ENCODE measurements at regions of chr16 and their contacts with region 1.

Region 1: GRCh38 chr16:56931892-56932720 is at the start of gene HERPUD1:
- DNase-seq: peak; percentile 98
- H3K4me3 Mint-ChIP-seq: peak within 1 kb of the TSS; percentile 99
- H3K27ac Mint-ChIP-seq: peak within 1 kb of the TSS; percentile 100
- H3K4me1 Mint-ChIP-seq: peaks cover 8% of the 10 kb centered on the region
- H3K27me3 Mint-ChIP-seq: no peaks in the 10 kb centered on the region
- CTCF ChIP-seq: no peak
- total RNA-seq, gene HERPUD1: 201 and 242 TPM in 2 replicates

Region 2: GRCh38 chr16:56866943-56867830 is 64.9 kb before region 1 on chr16:
- CTCF ChIA-PET with region 1: interaction called, 16 read pairs
- POLR2A ChIA-PET with region 1: interaction called, 12 read pairs
- intact Hi-C with region 1: loop called (anchors 5 kb)
- DNase-seq: peak; percentile 63
- H3K4me3 Mint-ChIP-seq: no peak overlapping the region
- H3K27ac Mint-ChIP-seq: no peak overlapping the region
- H3K4me1 Mint-ChIP-seq: peaks cover 5% of the 10 kb centered on the region
- H3K27me3 Mint-ChIP-seq: no peaks in the 10 kb centered on the region
- CTCF ChIP-seq: peak; percentile 66

Region 3: GRCh38 chr16:56944954-56945839 is 13.1 kb after region 1 on chr16:
- CTCF ChIA-PET with region 1: interaction called, 3 read pairs
- POLR2A ChIA-PET with region 1: interaction called, 31 read pairs
- intact Hi-C with region 1: no loop called
- DNase-seq: no peak
- H3K4me3 Mint-ChIP-seq: no peak overlapping the region
- H3K27ac Mint-ChIP-seq: no peak overlapping the region
- H3K4me1 Mint-ChIP-seq: no peaks in the 10 kb centered on the region
- H3K27me3 Mint-ChIP-seq: no peaks in the 10 kb centered on the region
- CTCF ChIP-seq: no peak

Region 4: DNA sequence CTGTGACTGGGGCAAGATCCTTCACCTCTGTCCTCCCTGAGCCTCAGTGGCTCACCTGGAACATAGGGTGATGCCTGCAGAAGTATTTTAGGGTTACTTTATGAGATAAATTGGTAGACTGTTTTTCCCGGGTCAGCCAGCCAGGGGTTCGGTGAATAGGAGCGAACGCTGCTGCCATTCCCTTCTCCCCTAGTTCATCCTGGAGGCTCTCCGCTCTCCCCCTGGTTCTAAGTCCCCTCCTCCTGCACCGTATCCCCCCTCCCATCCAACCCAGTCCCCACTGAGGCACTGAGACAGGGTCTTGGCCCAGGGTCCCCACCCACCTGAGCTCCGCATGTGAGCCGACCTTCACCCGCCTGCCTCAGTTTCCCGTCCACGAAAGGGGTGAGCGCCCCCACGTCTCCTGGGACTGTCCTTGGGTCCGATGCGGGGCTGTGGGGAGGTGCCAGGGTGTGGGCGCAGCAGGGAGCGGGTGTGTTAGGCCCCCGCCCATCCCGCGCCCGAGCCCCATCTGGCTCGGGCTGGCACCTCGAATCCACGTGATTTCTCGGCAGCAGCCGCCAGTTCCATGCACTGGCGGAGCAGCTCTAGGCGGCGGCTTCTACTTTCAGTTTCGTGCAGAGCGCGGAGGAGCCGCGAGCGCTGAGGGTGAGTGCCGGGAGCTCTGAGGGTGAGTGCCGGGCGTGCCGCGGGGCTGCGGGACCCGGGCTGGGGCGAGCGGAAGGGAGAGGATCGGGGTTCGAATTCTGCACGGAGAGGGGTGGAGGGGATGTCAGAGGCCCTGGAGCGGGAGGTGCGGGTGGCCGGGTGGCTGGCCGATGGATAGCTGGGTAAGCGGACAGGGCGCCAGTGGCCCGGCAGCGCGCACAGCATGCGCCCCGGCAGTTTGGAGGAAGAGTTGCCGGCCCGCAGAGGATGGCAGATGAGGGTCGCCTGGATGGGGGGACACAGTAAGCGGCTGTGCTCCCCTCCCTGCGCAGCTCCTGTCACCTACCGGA is 57.1 kb after region 1 on chr16 and contains the start of gene NLRC5:
- CTCF ChIA-PET with region 1: no interaction called
- POLR2A ChIA-PET with region 1: interaction called, 23 read pairs
- intact Hi-C with region 1: no loop called
- DNase-seq: peak; percentile 83
- H3K4me3 Mint-ChIP-seq: peak within 1 kb of the TSS; percentile 100
- H3K27ac Mint-ChIP-seq: peak within 1 kb of the TSS; percentile 96
- H3K4me1 Mint-ChIP-seq: peaks cover 30% of the 10 kb centered on the region
- H3K27me3 Mint-ChIP-seq: no peaks in the 10 kb centered on the region
- CTCF ChIP-seq: no peak
- total RNA-seq, gene NLRC5: 8.0 and 14.5 TPM in 2 replicates